ENCODE measurements at regions of chr9 and their contacts with region 1.

Region 1: GRCh38 chr9:114385412-114386181 is 2.2 kb downstream of the AKNA start:
- DNase-seq: peak; percentile 89
- H3K4me3 Mint-ChIP-seq: peak overlapping the region; percentile 90
- H3K27ac Mint-ChIP-seq: peak overlapping the region; percentile 93
- H3K4me1 Mint-ChIP-seq: peaks cover 69% of the 10 kb centered on the region
- H3K27me3 Mint-ChIP-seq: no peaks in the 10 kb centered on the region

Region 2: DNA sequence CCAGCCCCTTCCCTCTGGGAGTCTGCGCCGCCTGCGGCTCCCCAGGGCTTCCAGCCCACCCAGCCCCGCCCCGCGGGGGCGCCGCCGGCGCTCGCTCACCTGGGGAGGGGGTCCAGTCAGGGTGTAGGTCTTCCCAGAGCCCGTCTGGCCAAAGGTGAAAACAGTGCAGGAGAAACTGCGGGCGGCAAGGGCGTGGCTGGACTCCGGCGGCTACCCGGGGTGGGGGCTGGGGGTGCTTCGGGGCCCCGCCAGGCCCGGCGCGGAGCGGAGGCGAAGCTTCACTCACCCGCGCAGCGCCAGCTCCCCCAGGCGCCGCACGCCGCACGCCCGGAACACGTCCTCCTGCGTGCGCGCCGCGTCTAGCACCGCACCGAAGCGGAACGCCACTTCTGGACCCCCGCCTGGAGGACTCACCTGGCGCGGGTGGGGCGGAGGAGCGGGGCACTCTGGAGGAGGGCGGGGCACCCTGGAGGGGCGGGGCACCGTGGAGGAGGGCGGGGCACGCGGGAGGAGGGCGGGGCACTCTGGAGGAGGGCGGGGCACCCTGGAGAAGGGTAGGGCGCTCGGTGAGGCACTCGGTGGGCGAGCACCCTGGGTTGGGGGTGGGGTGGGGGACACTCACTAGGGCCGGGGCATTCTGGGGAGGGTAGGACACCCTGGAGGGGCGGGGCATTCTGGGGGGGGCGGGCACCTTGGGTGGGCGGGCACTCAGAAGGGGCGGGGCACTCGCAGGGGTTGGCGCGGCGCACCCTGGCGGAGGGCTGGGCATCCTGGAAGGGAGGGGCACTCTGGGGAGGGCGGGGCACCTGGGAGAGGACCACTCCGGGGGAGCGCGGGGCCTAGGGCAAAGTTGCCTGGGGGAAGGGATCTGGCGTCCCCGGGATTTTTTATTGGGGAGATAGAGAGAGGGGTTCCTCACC is 287.3 kb before region 1 on chr9:
- intact Hi-C with region 1: loop called (anchors 5 kb)
- DNase-seq: no peak
- H3K4me3 Mint-ChIP-seq: no peak overlapping the region
- H3K27ac Mint-ChIP-seq: no peak overlapping the region
- H3K4me1 Mint-ChIP-seq: peaks cover 5% of the 10 kb centered on the region
- H3K27me3 Mint-ChIP-seq: peaks cover 41% of the 10 kb centered on the region

Region 3: DNA sequence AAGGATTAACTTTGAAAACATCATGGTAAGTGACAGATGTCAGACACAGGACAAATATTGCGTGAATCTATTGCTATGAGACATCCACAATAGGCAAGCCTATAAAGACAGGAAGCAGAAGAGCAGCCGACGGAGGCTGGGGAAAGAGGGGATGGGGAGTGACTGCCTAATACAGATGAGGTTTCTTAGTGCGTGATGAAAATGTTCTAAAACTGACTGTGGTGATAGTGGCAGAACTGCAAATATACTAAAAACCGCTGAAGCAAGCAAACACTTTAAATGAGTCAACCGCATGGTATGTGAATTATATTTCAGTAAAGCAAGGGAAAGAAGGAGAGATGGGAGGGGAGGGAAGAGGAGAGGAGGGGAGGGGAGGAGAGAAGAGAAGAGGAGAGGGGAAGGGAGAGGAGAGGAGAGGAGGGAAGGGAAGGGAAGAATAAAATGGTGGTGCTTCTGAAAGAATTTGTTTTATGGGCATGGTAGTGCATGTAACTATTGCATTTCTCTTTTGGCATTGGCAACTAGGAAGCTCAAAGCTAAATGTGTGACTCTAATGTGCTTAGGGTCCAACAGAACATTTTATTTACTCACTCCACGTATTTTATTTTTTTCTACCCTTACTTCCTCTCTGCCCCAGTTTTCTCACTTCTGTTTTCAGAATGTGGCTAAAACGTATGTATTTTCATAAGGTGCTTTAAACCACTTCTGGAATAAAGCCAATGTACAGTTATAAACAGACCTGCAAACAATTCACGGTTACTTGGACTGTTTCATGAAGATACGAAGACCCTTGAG is 19.1 kb before region 1 on chr9:
- intact Hi-C with region 1: loop called (anchors 1 kb)
- DNase-seq: peak; percentile 38
- H3K4me3 Mint-ChIP-seq: peak overlapping the region; percentile 53
- H3K27ac Mint-ChIP-seq: peak overlapping the region; percentile 97
- H3K4me1 Mint-ChIP-seq: peaks cover 77% of the 10 kb centered on the region
- H3K27me3 Mint-ChIP-seq: no peaks in the 10 kb centered on the region

Region 4: GRCh38 chr9:114413861-114414301 is 28.3 kb after region 1 on chr9:
- intact Hi-C with region 1: no loop called
- DNase-seq: no peak
- H3K4me3 Mint-ChIP-seq: no peak overlapping the region
- H3K27ac Mint-ChIP-seq: no peak overlapping the region
- H3K4me1 Mint-ChIP-seq: peaks cover 10% of the 10 kb centered on the region
- H3K27me3 Mint-ChIP-seq: peaks cover 1% of the 10 kb centered on the region

Region 5: GRCh38 chr9:114487607-114488300 is 102.2 kb after region 1 on chr9:
- intact Hi-C with region 1: loop called (anchors 5 kb)
- DNase-seq: peak; percentile 55
- H3K4me3 Mint-ChIP-seq: no peak overlapping the region
- H3K27ac Mint-ChIP-seq: peak overlapping the region; percentile 20
- H3K4me1 Mint-ChIP-seq: peaks cover 29% of the 10 kb centered on the region
- H3K27me3 Mint-ChIP-seq: no peaks in the 10 kb centered on the region

Region 6: DNA sequence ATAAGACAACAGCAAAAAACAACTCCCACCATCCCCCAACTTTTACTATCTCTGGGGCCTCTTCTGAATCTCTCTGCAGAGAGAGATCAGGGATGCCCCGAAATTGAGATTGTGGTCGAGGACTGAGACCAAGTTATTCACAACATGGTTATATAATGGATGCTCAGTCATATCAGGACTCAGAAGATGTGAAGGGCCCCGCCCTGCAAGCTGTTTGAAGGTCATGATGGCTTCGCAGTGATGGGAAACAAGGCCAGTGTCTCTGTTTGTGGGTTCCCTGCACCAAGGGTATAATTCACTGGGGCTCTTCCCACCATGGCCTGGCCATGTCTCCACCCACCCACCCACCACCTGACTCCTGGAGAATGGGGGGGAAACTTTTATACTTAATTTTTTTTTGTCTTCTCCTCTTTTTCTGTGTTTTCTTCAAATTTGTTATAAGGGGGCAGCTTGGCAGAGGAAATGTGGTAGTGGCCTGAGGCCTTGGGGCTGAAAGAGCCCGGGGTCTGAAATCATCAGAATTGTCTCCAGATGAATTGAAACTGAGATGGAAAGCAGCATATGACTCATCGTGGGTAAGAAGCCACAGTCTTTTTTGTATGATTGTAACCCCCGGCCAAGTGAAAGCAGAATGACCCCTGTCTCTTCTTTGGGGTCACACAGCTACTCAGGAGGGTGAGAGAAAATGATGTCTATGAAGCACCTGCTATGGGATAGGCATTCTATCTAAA is 311.4 kb after region 1 on chr9:
- intact Hi-C with region 1: loop called (anchors 2 kb)
- DNase-seq: peak; percentile 80
- H3K4me3 Mint-ChIP-seq: peak overlapping the region; percentile 46
- H3K27ac Mint-ChIP-seq: peak overlapping the region; percentile 95
- H3K4me1 Mint-ChIP-seq: peaks cover 92% of the 10 kb centered on the region
- H3K27me3 Mint-ChIP-seq: no peaks in the 10 kb centered on the region

Measured in activated T-helper 1 cell treated with anti-CD3 and anti-CD28 coated beads, Interleukin-12 subunit alpha, Interleukin-12 subunit beta, Interleukin-2, Interleukin-4 antibody, amounts not matched to agents 30 ng/mL and 10 ng/mL and 1 ng/mL, durations not matched to agents 14 hours and 24 hours and 36 hours (primary cell).